GM10248 (cell line): ENCODE measurements at regions of chr13 and their contacts with region 1.

Region 1: GRCh38 chr13:46679369-46680120 is 117.4 kb downstream of the ESD start:
- DNase-seq: peak; percentile 73
- CTCF ChIP-seq: peak; percentile 3

Region 2: DNA sequence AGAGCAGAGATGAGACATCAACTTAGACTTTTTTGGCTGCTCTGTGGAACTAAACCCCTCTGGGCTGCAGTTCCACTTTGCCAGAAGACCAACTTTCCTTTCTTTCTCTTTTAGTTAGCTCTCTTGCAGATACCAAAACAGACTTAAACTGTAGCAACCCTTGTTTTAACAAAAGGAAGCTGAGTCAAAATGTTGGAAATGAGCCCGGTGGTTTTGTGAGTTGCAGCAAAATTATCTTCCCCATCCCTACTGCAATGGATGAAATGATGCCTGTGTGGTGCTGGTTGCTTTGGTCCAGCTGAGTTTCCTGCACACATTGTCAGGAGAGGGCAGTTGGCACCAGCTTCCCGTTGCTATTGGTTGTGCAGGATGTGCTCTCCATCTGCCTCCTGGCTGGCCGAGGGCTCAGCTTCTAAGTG is 11.2 kb before region 1 on chr13:
- CTCF ChIA-PET with region 1: interaction called, 13 read pairs
- POLR2A ChIA-PET with region 1: no interaction called
- DNase-seq: no peak
- CTCF ChIP-seq: no peak